ENCODE measurements at regions of chr12 and their contacts with region 1.

Region 1: GRCh38 chr12:92871116-92871515 is 58.0 kb downstream of the EEA1 start:
- H3K4me3 Mint-ChIP-seq: peak overlapping the region; percentile 52
- H3K27ac Mint-ChIP-seq: peak overlapping the region; percentile 70
- H3K4me1 Mint-ChIP-seq: peaks cover 29% of the 10 kb centered on the region
- H3K27me3 Mint-ChIP-seq: no peaks in the 10 kb centered on the region

Region 2: GRCh38 chr12:92928962-92929915 is 58.1 kb after region 1 on chr12 and contains the start of gene EEA1:
- intact Hi-C with region 1: loop called (anchors 5 kb)
- H3K4me3 Mint-ChIP-seq: peak within 1 kb of the TSS; percentile 88
- H3K27ac Mint-ChIP-seq: peak within 1 kb of the TSS; percentile 94
- H3K4me1 Mint-ChIP-seq: peaks cover 20% of the 10 kb centered on the region
- H3K27me3 Mint-ChIP-seq: no peaks in the 10 kb centered on the region

Measured in dendritic cell treated with granulocyte-macrophage colony-stimulating factor and Interleukin-4, amounts not matched to agents 40 ng/mL and 50 ng/mL, for 4 days (primary cell).